ENCODE measurements at regions of chr12 and their contacts with region 1.

Region 1: DNA sequence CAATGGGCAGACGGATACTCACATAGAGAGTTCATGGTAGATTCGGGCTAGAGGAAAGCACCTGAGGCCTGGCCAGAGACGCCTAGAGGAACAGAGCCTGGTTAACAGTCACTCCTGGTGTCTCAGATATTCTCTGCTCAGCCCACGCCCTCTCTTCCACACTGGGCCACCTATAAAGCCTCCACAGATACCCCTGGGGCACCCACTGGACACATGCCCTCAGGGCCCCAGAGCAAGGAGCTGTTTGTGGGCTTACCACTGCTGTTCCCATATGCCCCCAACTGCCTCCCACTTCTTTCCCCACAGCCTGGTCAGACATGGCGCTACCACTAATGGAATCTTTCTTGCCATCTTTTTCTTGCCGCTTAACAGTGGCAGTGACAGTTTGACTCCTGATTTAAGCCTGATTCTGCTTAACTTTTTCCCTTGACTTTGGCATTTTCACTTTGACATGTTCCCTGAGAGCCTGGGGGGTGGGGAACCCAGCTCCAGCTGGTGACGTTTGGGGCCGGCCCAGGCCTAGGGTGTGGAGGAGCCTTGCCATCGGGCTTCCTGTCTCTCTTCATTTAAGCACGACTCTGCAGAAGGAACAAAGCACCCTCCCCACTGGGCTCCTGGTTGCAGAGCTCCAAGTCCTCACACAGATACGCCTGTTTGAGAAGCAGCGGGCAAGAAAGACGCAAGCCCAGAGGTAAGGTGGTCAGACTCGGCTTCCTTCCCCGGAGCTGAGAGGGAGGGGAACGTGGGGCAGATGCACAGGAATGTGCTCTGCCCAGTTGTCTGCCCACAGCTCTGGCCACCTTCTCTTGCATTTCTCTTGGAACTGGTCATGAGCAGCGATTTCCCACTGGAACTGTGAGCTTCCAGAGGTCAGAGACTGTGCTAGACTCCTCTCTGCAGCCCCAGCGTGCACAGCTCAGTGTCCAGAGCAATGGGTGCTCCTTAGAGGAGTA is at the start of gene CD4:
- DNase-seq: peak; percentile 85
- ATAC-seq: peak; percentile 75 to 83
- H3K4me3 ChIP-seq: peak within 1 kb of the TSS; percentile 55
- H3K27ac ChIP-seq: peak within 1 kb of the TSS; percentile 82
- H3K4me1 ChIP-seq: peaks cover 47% of the 10 kb centered on the region
- H3K27me3 ChIP-seq: no peaks in the 10 kb centered on the region
- CTCF ChIP-seq: no peak
- total RNA-seq, gene CD4: 80.3 TPM

Region 2: DNA sequence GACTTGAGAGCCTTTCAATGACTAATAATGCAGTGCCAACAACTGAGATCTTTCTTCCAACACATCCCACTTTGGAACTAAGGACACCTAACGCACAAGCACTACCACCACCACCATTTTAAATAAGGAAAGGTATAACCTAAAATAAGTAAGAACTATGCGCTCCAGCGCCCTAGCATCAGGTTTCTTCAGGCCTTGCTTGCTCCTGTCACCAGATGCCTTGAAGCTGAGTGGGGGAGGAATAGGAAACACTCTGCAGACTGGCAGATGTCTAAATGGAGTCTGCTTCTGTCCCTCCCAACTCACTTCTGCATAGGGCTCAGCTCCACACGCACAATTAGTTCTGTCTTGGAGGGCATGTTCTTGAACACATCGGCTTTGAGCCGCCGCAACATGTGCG is 197.2 kb before region 1 on chr12:
- intact Hi-C with region 1: no loop called
- DNase-seq: no peak
- ATAC-seq: no peak
- H3K4me3 ChIP-seq: no peak overlapping the region
- H3K27ac ChIP-seq: no peak overlapping the region
- H3K4me1 ChIP-seq: no peaks in the 10 kb centered on the region
- H3K27me3 ChIP-seq: no peaks in the 10 kb centered on the region
- CTCF ChIP-seq: no peak

Region 3: GRCh38 chr12:6735448-6736191 is 53.6 kb before region 1 on chr12:
- intact Hi-C with region 1: loop called (anchors 10 kb)
- DNase-seq: peak; percentile 77
- ATAC-seq: peak; percentile 89 to 93
- H3K4me3 ChIP-seq: no peak overlapping the region
- H3K27ac ChIP-seq: peak overlapping the region; percentile 22
- H3K4me1 ChIP-seq: peaks cover 6% of the 10 kb centered on the region
- H3K27me3 ChIP-seq: no peaks in the 10 kb centered on the region
- CTCF ChIP-seq: peak; percentile 75